ENCODE measurements at regions of chr3 and their contacts with region 1.

Region 1: DNA sequence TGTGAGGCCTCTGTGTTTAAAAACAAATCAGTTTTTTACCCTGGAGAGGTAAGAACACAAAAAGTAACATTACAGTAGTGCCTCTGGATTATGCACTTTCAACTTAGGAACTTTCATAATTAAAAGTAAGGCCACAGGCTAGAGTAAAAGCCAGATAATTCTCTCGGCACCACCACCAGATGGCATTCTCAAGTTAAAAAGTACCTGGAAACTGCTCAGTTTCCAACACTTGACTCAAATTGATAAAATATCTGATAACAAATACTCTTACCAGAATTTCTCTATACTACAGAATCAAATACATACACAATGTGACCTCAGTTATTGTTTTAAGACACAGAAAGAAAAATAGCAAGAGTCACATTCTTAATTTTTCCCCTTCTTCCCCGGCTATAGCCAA is 19.9 kb downstream of the SPICE1 start:
- DNase-seq: peak; percentile 12

Region 2: DNA sequence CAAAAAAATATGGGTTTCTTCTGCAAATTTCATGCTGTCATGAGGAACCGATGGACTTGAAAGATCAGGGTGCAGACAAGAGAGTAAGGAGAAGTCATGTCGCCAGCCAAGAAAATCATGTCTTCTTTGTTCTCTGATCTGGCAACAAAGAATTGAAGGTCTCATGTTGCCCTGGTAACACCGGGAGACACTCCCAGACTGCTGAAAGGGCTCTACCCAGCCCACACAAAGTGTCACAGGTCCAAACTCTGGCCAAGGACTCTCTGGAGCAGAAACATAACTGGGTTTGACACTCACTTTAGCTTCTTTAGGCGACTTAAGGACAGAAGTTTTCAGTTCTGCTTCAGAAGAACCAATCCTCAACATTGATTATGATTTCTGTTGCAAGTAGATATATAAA is 80.2 kb after region 1 on chr3:
- CTCF ChIA-PET with region 1: interaction called, 19 read pairs
- POLR2A ChIA-PET with region 1: no interaction called
- DNase-seq: no peak

Region 3: DNA sequence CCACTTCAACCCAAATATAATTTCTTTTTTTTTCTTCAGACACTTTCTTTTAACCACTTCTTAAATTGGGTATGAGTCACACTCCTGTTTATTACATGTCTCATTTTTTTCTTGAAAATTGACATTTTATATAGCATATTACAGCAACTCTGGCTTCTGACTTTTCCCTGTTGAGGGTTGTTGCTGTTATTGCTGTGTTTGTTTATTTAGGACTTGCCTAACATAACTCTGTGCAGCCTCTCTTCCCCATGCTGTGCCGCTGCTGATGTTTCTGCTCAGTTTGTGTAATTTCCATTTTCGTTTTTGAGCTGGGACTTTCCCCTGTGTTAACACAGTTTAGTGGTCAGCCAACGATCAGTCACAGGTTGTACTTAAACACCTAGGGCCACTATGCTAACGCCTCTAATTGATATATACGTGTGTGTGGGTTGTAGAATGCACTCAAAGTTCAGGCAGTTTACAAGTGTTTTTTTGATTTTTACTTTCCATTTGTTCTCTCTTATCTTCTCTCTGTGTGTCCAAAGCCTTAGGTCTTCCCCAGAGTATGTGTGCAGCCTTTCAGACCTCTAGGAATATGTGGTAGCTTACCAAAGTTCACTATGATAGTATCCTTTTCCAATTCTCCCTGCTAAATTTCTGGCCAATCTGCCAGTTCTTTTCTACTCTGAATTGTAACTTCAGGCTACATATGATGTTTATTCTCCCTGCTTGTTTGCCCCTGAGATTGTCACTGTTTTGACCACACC is 1314.8 kb after region 1 on chr3:
- CTCF ChIA-PET with region 1: no interaction called
- POLR2A ChIA-PET with region 1: no interaction called
- DNase-seq: peak; percentile 5